HEK293T (cell line): ENCODE measurements at regions of chr13 and their contacts with region 1.

Region 1: DNA sequence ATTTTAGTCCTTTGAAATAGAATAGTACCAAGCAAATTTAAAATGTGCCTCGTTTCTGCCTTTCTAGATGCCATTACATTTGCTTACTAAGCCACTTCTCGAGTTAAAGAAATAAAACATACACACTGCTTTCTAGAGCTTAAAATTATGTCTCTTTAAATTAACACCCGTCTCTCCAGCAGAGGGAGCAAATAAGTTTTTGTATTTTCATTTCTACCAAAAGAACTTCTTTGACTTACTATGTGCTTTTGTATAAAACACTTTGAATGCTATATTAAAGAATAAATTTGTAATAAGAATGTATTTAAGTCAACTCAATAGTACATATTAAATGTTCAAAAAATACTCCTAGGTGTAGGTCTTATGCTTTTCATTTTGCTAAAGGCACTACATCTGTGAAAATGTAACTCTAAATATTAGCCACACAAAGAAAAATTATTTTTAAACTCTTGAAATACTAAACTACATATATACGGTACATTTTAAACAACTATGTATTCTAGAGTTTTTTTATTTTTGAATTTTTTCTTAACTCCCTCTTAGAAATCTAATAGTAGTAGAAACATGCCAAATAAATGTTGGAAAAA is 269.3 kb upstream of the MIR17HG start:
- DNase-seq: peak; percentile 37

Region 2: DNA sequence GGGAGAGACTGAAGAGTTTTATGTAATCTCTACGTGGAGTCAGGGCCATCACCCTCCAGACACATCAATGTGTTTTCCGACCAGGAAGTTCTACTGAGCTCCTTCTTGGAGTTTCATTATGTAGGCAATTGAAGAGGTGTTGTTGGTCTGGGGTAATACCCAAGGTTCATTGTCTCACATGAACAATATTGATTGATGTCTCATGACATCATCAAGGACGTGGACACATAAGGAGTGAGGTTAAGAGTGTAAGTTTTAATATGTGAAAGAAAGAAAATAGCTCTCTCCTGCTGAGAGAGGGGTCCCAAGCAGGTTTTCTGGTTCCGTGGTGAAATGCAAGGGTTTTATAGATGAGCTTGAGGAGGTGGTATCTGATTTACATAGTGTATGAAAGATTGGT is 11.4 kb before region 1 on chr13:
- CTCF ChIA-PET with region 1: interaction called, 10 read pairs
- POLR2A ChIA-PET with region 1: no interaction called
- DNase-seq: no peak

Region 3: DNA sequence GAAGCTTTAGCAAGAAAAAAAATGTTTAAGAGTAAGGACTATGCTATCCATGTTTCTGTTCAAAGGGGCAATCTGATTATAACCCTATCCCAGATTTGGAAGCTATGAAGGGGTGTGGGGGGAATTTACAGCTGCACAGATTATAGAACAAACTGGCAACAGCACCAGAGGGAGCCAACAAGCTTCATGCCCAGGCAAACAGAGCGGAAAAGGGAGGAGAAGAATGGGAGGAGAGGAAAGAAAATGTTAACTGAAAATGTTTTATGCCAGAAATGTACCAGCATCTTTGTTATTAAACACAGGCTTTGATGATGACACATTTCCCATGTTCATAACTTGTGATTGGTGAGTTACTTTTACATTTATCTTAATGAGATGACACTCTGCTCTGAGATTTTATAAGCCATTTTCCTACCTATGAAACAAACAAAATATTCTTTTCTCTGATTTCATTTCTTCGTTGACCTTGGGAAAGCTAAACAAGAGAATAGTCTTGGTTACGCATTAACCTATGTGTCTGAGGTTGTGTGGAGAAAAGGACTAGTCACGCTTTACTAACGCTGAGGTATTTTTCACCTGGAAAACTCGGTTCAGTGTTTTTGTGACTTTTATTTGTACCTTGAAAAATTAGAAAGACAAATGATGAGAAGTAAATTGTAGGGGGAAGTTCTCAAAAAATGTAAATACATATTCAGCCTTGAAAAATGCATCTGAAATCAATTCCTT is 33.5 kb after region 1 on chr13:
- CTCF ChIA-PET with region 1: no interaction called
- POLR2A ChIA-PET with region 1: no interaction called
- DNase-seq: no peak

Region 4: GRCh38 chr13:91264484-91264883 is 186.3 kb after region 1 on chr13:
- CTCF ChIA-PET with region 1: no interaction called
- POLR2A ChIA-PET with region 1: no interaction called
- DNase-seq: no peak